GM12878 (cell line): ENCODE measurements at regions of chr5 and their contacts with region 1.

Region 1: GRCh38 chr5:38922199-38922598 is 76.4 kb downstream of the OSMR start:
- DNase-seq: no peak
- ATAC-seq: peak; percentile 97
- H3K4me3 ChIP-seq: no peak overlapping the region
- H3K27ac ChIP-seq: no peak overlapping the region
- H3K4me1 ChIP-seq: no peaks in the 10 kb centered on the region
- H3K27me3 ChIP-seq: no peaks in the 10 kb centered on the region
- CTCF ChIP-seq: peak; percentile 75 to 89 (median 83)
- EP300 ChIP-seq: no peak
- POLR2A ChIP-seq: no peak
- RAD21 ChIP-seq: peak; percentile 66

Region 2: GRCh38 chr5:38831909-38832308 is 90.3 kb before region 1 on chr5:
- CTCF ChIA-PET with region 1: interaction called, 9 read pairs
- POLR2A ChIA-PET with region 1: no interaction called
- RAD21 ChIA-PET with region 1: no interaction called
- SMC1A ChIA-PET with region 1: no interaction called
- in situ Hi-C with region 1: no loop called
- intact Hi-C with region 1: loop called (anchors 1 kb)
- DNase-seq: no peak
- ATAC-seq: peak; percentile 52
- H3K4me3 ChIP-seq: no peak overlapping the region
- H3K27ac ChIP-seq: no peak overlapping the region
- H3K4me1 ChIP-seq: no peaks in the 10 kb centered on the region
- H3K27me3 ChIP-seq: no peaks in the 10 kb centered on the region
- CTCF ChIP-seq: peak; percentile 38 to 46 (median 42); a peak in 4 of 6 replicates
- EP300 ChIP-seq: no peak
- POLR2A ChIP-seq: no peak
- RAD21 ChIP-seq: no peak

Region 3: GRCh38 chr5:38968665-38969064 is 46.5 kb after region 1 on chr5:
- CTCF ChIA-PET with region 1: no interaction called
- POLR2A ChIA-PET with region 1: interaction called, 10 read pairs
- RAD21 ChIA-PET with region 1: no interaction called
- SMC1A ChIA-PET with region 1: no interaction called
- in situ Hi-C with region 1: no loop called
- intact Hi-C with region 1: no loop called
- DNase-seq: no peak
- ATAC-seq: no peak
- H3K4me3 ChIP-seq: no peak overlapping the region
- H3K27ac ChIP-seq: no peak overlapping the region
- H3K4me1 ChIP-seq: no peaks in the 10 kb centered on the region
- H3K27me3 ChIP-seq: no peaks in the 10 kb centered on the region
- CTCF ChIP-seq: no peak
- EP300 ChIP-seq: no peak
- POLR2A ChIP-seq: no peak
- RAD21 ChIP-seq: no peak

Region 4: GRCh38 chr5:39608024-39608423 is 685.8 kb after region 1 on chr5:
- CTCF ChIA-PET with region 1: no interaction called
- POLR2A ChIA-PET with region 1: no interaction called
- RAD21 ChIA-PET with region 1: no interaction called
- SMC1A ChIA-PET with region 1: no interaction called
- in situ Hi-C with region 1: no loop called
- intact Hi-C with region 1: no loop called
- DNase-seq: no peak
- ATAC-seq: peak; percentile 88
- H3K4me3 ChIP-seq: no peak overlapping the region
- H3K27ac ChIP-seq: no peak overlapping the region
- H3K4me1 ChIP-seq: no peaks in the 10 kb centered on the region
- H3K27me3 ChIP-seq: no peaks in the 10 kb centered on the region
- CTCF ChIP-seq: no peak
- EP300 ChIP-seq: no peak
- POLR2A ChIP-seq: no peak
- RAD21 ChIP-seq: no peak